ENCODE measurements at regions of chr15 and their contacts with region 1.

Region 1: GRCh38 chr15:93997084-93997918 is 234.1 kb upstream of the MCTP2 start:
- DNase-seq: no peak
- ATAC-seq: no peak
- H3K4me3 ChIP-seq: no peak overlapping the region
- H3K4me3 Mint-ChIP-seq: no peak overlapping the region
- H3K27ac ChIP-seq: no peak overlapping the region
- H3K27ac Mint-ChIP-seq: no peak overlapping the region
- H3K4me1 ChIP-seq: no peaks in the 10 kb centered on the region
- H3K4me1 Mint-ChIP-seq: peaks cover 0 to 3% (median 0%) of the 10 kb centered on the region in 7 donors
- H3K27me3 ChIP-seq: no peaks in the 10 kb centered on the region
- H3K27me3 Mint-ChIP-seq: peaks cover 0 to 12% (median 4%) of the 10 kb centered on the region in 5 donors

Region 2: DNA sequence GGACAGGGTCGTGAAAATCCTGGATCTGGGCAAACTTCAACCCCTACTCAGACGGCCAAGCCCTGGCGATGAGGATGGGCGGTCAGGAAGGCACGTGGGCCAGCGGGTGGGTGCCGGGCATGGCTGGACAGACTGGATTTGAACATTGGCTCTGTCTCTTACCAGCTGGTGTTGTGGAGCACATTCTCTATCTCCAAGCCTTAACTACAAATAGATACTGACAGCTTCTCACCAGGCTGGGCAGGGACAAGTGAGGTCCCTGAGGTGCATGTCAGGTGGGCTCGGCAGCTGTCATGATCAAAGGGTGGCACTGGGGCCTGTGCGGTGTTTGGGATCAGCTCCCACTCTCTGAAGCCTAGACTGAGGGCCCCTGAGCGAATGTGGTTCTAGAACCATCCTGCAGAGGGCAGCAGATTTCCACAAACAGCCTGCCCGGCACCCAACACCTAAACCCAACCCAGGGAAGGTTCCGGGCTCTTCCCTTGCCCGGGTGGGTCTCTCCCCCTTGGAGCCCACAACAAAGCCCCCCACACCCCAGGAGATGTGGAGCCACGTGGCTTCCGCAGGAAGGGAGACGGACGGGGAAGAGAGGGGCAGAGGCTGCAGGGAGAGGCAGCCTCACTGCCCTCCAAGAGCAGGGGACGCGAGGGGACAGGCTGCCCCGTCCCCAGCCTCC is 966.7 kb before region 1 on chr15:
- CTCF ChIA-PET with region 1: no interaction called
- POLR2A ChIA-PET with region 1: no interaction called
- intact Hi-C with region 1: loop called in 1 of 2 experiments (anchors 10 kb)
- DNase-seq: peak; percentile 38 to 69 (median 59)
- ATAC-seq: peak; percentile 85
- H3K4me3 ChIP-seq: no peak overlapping the region
- H3K4me3 Mint-ChIP-seq: peak overlapping the region in 1 of 10 donors; percentile 12
- H3K27ac ChIP-seq: no peak overlapping the region
- H3K27ac Mint-ChIP-seq: peak overlapping the region in 6 of 9 donors; percentile 69 to 82 (median 74)
- H3K4me1 ChIP-seq: peaks cover 0 to 11% of the 10 kb centered on the region in 2 donors
- H3K4me1 Mint-ChIP-seq: peaks cover 6 to 33% (median 20%) of the 10 kb centered on the region in 7 donors
- H3K27me3 ChIP-seq: no peaks in the 10 kb centered on the region
- H3K27me3 Mint-ChIP-seq: no peaks in the 10 kb centered on the region

Region 3: DNA sequence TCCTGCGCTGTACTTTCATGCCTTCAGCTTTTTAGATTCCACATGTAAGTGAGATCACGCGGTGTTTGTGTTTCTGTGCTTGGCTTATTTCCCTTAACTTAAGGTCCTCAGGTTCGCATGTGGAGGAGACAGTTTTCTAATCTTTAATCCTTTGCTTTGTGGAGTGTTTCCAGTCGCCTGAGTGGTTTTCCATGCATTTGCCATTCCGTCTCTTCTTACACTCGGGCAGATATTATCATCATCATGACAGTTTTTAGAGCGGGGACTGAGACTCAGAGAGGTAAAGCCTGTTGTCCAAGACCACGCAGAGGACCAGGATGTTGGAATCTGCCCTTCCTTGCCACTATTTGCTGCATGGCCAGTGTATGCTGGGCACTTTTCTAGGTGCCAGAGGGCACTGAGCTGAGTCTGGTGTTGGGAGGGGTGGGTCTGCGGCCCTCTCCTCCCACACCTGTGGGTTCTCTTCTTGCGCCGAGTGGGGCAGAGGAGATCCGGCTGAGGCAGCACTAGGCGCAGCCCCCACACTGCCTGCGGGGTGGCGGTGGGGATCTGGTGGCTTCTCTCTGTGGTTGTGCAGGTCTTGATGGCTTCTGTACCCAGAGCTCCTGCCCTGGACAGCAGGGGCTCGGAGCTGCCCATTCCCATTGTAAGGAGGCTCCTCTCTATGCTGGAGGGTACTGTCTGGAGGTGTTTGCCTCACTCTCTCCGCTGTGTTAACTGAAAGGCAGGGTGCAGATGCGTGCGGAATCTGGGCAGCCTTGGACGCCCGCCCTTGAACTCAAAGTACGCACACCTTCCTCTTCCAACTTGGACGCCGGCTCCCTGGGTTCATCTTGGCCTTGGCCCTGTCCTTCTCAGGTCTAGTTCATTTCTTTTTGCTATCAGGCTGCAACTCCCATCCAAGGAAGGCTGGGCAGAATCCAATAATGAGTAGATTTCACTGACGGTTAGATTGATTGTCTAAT is 752.3 kb before region 1 on chr15:
- CTCF ChIA-PET with region 1: no interaction called
- POLR2A ChIA-PET with region 1: no interaction called
- intact Hi-C with region 1: no loop called
- DNase-seq: no peak
- ATAC-seq: no peak
- H3K4me3 ChIP-seq: no peak overlapping the region
- H3K4me3 Mint-ChIP-seq: no peak overlapping the region
- H3K27ac ChIP-seq: no peak overlapping the region
- H3K27ac Mint-ChIP-seq: peak overlapping the region in 1 of 9 donors; percentile 34
- H3K4me1 ChIP-seq: no peaks in the 10 kb centered on the region
- H3K4me1 Mint-ChIP-seq: peaks cover 0 to 9% (median 0%) of the 10 kb centered on the region in 7 donors
- H3K27me3 ChIP-seq: no peaks in the 10 kb centered on the region
- H3K27me3 Mint-ChIP-seq: peaks cover 14 to 42% (median 20%) of the 10 kb centered on the region in 5 donors